A549 (cell line): ENCODE measurements at regions of chr15 and their contacts with region 1.

Region 1: GRCh38 chr15:25695875-25696760 is 167.0 kb downstream of the ATP10A start:
- DNase-seq: no peak
- ATAC-seq: no peak
- H3K4me3 ChIP-seq: no peak overlapping the region
- H3K27ac ChIP-seq: no peak overlapping the region
- H3K4me1 ChIP-seq: no peaks in the 10 kb centered on the region
- CTCF ChIP-seq: no peak
- EP300 ChIP-seq: no peak
- POLR2A ChIP-seq: no peak
- RAD21 ChIP-seq: no peak

Region 2: GRCh38 chr15:25710184-25710583 is 14.1 kb after region 1 on chr15:
- CTCF ChIA-PET with region 1: interaction called, 12 read pairs
- POLR2A ChIA-PET with region 1: no interaction called
- DNase-seq: peak; percentile 28 to 35
- ATAC-seq: peak; percentile 92 to 97
- H3K4me3 ChIP-seq: no peak overlapping the region
- H3K27ac ChIP-seq: no peak overlapping the region
- H3K4me1 ChIP-seq: no peaks in the 10 kb centered on the region
- CTCF ChIP-seq: peak; percentile 41; the same call in 2 of the 3 replicates
- EP300 ChIP-seq: no peak
- POLR2A ChIP-seq: no peak
- RAD21 ChIP-seq: peak in 1 of 2 experiments; percentile 42; a peak in 2 of 5 replicates